Naive thymus-derived CD4-positive, alpha-beta T cell (primary cell): ENCODE measurements at regions of chr11 and their contacts with region 1.

Region 1: DNA sequence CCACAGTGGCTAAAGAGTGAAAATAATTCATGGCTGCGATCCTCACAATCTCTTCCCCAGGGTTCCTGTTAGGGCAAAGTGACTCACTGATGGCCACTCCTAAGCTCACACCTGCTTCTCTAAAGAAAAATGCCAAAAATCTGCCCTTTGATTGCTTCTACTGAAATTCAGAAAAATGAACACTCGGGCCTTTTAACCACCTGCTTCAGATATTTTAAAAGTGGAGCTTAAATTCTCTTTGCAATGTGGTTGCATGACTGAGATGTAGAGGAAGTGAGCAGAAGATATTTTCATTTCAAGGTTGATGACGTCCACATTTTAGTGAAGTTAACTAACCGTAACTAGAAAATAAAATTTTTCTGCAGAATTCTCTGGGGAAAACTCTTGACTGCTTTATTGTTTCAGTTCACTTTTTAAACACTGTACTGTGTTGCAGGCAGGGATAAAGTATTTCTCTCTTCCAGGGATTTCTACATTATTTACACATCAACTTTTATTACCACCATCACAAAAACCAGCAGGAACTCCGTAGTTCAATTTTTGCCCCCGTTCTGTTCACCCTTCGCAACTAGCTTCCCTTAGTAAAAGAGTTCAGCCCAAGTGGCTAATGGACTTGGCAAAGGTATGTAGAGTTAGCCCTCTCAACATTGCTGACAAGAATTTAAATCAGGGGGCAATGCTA is 8.5 kb downstream of the RAB30 start:
- DNase-seq: peak in 7 of 9 donors; percentile 19 to 60 (median 50)
- ATAC-seq: peak; percentile 78
- H3K4me3 ChIP-seq: peak overlapping the region; percentile 29
- H3K4me3 Mint-ChIP-seq: peak overlapping the region; percentile 72 to 92 (median 88)
- H3K27ac ChIP-seq: peak overlapping the region; percentile 71
- H3K27ac Mint-ChIP-seq: peak overlapping the region; percentile 90 to 99 (median 94)
- H3K4me1 ChIP-seq: peaks cover 0 to 25% of the 10 kb centered on the region in 2 donors
- H3K4me1 Mint-ChIP-seq: peaks cover 18 to 61% (median 55%) of the 10 kb centered on the region in 7 donors
- H3K27me3 ChIP-seq: no peaks in the 10 kb centered on the region
- H3K27me3 Mint-ChIP-seq: no peaks in the 10 kb centered on the region

Region 2: GRCh38 chr11:83019888-83020579 is 43.2 kb before region 1 on chr11:
- CTCF ChIA-PET with region 1: no interaction called
- POLR2A ChIA-PET with region 1: no interaction called
- intact Hi-C with region 1: loop called in 1 of 2 experiments (anchors 10 kb)
- DNase-seq: no peak
- ATAC-seq: no peak
- H3K4me3 ChIP-seq: no peak overlapping the region
- H3K4me3 Mint-ChIP-seq: no peak overlapping the region
- H3K27ac ChIP-seq: no peak overlapping the region
- H3K27ac Mint-ChIP-seq: no peak overlapping the region
- H3K4me1 ChIP-seq: peaks cover 0 to 11% of the 10 kb centered on the region in 2 donors
- H3K4me1 Mint-ChIP-seq: peaks cover 18 to 42% (median 30%) of the 10 kb centered on the region in 7 donors
- H3K27me3 ChIP-seq: no peaks in the 10 kb centered on the region
- H3K27me3 Mint-ChIP-seq: no peaks in the 10 kb centered on the region

Region 3: DNA sequence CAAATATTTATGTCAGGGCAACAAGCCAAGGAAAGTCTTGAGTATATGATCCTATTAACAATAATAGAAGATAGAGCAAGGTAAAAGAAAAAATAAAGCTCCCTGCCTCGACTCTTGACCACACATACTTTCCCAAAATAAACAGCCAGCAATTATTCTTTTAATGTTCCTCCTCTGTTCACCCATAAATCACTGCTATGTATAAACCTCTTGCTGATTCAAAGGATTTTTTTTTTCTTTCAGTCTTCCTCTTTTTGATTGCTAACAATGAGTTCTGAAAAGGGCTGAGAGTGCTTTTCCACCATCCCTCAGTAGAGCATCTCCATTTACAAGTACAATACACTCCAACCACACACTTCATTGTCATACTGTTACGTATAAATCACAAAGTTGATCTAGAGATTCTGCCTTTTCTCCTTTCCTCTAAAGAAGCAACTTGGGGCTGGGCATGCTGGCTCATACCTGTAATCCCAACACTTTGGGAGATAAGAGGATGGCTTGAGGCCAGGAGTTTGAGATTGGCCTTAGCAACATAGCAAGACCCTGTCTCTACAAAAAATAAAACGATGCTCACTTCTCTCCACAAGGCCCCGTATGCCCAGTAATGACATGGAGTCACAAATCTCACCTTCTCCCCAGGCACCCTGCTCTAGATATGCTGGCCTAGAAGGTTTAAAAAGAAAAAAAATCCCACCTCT is 15.5 kb before region 1 on chr11:
- CTCF ChIA-PET with region 1: interaction called, 6 read pairs
- POLR2A ChIA-PET with region 1: interaction called, 4 read pairs
- intact Hi-C with region 1: loop called in 1 of 2 experiments (anchors 2 kb)
- DNase-seq: no peak
- ATAC-seq: no peak
- H3K4me3 ChIP-seq: no peak overlapping the region
- H3K4me3 Mint-ChIP-seq: peak overlapping the region in 1 of 10 donors; percentile 0
- H3K27ac ChIP-seq: no peak overlapping the region
- H3K27ac Mint-ChIP-seq: peak overlapping the region in 6 of 9 donors; percentile 16 to 38 (median 26)
- H3K4me1 ChIP-seq: no peaks in the 10 kb centered on the region
- H3K4me1 Mint-ChIP-seq: peaks cover 3 to 65% (median 25%) of the 10 kb centered on the region in 7 donors
- H3K27me3 ChIP-seq: no peaks in the 10 kb centered on the region
- H3K27me3 Mint-ChIP-seq: no peaks in the 10 kb centered on the region

Region 4: GRCh38 chr11:83306200-83307080 is 243.2 kb after region 1 on chr11:
- CTCF ChIA-PET with region 1: no interaction called
- POLR2A ChIA-PET with region 1: no interaction called
- intact Hi-C with region 1: no loop called
- DNase-seq: no peak
- ATAC-seq: no peak
- H3K4me3 ChIP-seq: no peak overlapping the region
- H3K4me3 Mint-ChIP-seq: no peak overlapping the region
- H3K27ac ChIP-seq: no peak overlapping the region
- H3K27ac Mint-ChIP-seq: no peak overlapping the region
- H3K4me1 ChIP-seq: no peaks in the 10 kb centered on the region
- H3K4me1 Mint-ChIP-seq: no peaks in the 10 kb centered on the region
- H3K27me3 ChIP-seq: no peaks in the 10 kb centered on the region
- H3K27me3 Mint-ChIP-seq: peaks cover 0 to 12% (median 9%) of the 10 kb centered on the region in 5 donors